PC-3 (cell line): ENCODE measurements at regions of chr19 and their contacts with region 1.

Region 1: DNA sequence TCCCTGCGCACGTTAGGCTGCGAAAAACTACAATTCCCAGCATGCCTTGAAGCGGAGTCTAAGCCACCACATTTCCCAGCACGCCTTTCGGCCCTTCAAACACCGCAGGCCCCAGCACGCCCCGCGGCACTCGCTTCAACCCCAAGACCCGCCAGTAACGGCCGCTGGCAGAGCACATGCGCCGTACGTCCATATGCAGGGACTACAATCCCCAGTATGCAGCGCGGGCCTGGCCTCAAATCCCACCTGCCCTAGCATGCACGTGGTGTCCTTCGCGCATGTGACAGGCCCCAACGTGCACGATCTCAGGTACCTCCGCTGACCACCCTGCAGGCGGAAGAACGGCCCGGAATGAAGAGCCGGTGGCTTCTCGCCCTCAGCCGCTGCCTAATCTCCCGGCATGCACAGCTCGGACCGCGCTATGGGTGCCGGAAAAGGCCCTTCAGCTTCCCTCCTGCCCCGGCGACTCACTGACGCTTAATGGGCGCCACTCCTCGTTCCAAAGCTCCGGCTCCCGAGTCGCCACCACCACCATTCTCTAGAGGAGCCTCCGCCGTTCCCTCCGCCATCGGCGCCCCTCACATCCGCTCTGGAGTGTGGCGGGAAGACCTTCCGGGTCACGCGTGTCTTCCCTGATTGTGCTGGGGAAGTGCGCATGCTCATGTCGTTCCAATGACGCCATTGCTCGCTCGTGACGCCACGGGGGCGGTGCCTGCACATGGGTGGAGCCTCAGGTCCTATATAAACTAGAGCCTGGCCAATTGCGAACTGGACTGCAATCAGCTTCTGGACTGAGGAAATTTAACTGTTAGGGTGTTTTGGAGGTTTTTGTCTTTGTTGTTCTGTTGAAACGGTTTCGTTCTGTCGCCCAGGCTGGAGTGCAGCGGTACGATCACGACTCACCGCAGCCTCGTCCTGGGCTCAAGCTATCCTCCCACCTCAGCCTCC is at the start of gene DUS3L:
- DNase-seq: peak; percentile 99
- ATAC-seq: peak; percentile 95
- H3K4me3 ChIP-seq: peak within 1 kb of the TSS; percentile 78
- H3K27ac ChIP-seq: peak within 1 kb of the TSS; percentile 91
- H3K4me1 ChIP-seq: peaks cover 8% of the 10 kb centered on the region
- H3K27me3 ChIP-seq: no peaks in the 10 kb centered on the region
- CTCF ChIP-seq: no peak
- total RNA-seq, gene DUS3L: 118 and 148 TPM in 2 replicates

Region 2: DNA sequence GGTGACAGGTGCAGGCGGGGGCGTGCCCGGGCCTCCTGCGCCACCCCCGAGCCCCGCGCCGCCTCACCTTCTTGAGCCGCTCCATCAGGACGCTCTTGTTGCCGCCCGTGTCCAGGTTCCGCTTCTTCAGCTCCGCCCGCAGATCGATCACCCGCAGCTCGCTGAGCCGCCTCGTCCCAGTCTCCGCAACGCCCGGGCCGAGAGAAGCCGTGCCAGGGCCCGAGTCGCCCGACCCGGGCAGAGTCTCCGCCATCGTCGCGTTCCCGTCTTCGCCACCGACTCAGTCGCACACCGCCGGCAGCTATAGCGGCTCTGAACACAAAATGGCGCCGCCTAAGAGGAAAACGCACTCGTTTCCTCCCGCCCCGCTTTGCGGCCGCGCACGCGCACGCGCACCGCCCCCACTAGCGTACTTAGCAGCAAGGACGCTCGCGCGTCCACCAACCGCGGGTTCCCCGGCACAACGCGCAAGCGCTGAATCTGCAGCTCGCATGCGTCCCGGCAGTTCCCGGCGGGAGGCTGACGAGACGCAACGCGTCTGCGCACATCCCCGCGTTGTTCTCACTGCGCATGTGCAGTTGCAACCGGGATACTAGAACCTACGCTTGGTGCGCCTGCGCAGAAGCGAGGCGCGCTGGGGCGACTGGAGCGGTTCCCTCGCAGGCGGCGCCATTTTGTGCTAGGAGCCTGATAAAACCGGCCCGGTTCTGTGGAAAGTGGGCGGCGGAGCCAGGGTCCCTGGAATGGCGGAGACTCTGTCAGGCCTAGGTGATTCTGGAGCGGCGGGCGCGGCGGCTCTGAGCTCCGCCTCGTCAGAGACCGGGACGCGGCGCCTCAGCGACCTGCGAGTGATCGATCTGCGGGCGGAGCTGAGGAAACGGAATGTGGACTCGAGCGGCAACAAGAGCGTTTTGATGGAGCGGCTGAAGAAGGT is 168.1 kb before region 1 on chr19 and contains the starts of genes SAFB and SAFB2:
- CTCF ChIA-PET with region 1: no interaction called
- POLR2A ChIA-PET with region 1: interaction called, 14 read pairs
- intact Hi-C with region 1: no loop called
- DNase-seq: peak; percentile 100
- ATAC-seq: peak; percentile 90
- H3K4me3 ChIP-seq: peak within 1 kb of the TSS; percentile 90
- H3K27ac ChIP-seq: peak within 1 kb of the TSS; percentile 67
- H3K4me1 ChIP-seq: peaks cover 36% of the 10 kb centered on the region
- H3K27me3 ChIP-seq: no peaks in the 10 kb centered on the region
- CTCF ChIP-seq: no peak
- total RNA-seq, gene SAFB: 94.9 and 164 TPM in 2 replicates
- total RNA-seq, gene SAFB2: 77.5 and 101 TPM in 2 replicates

Region 3: DNA sequence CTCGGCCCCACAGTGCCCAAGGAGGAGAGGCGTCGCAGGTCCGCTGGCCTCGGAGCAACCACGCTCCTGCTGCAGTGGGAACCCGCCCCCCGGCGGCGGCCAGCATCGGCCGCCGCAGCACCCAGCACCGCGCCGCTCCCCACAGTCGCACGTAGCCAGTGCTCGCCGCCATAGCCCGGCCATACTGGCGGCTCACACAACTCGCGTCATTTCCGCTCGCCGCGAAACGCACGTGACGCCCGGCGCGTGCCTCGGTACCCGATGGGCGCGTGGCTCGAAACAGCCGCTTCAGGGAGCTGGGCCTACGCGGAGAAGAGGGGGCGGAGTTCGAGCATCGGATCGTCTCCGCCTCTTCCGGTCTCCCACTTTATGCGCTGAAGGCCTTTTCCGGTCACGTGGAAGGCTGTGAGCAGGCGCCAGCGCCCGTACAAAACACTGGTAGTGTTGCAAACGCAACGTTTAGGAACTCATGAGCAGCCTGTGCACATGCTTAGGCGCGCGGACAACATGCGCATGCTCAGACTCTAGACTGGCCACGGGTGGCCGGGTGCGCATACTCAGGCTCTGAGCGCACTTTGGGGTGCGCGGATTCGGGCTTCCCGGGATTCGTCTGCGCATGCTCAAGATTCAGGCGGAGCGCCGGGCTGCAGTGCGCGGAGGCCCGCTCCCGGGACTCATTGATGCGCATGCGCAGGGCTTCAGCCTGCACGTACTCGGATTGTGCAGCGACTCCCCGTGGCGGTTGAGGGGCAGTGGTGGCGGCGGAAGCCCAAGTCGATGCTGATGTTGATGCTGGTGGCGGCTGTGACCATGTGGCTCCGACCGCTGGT is 70.7 kb before region 1 on chr19 and contains the starts of genes CATSPERD and LONP1:
- CTCF ChIA-PET with region 1: no interaction called
- POLR2A ChIA-PET with region 1: no interaction called
- intact Hi-C with region 1: loop called (anchors 1 kb)
- DNase-seq: peak; percentile 100
- ATAC-seq: peak; percentile 89
- H3K4me3 ChIP-seq: peak within 1 kb of the TSS; percentile 95
- H3K27ac ChIP-seq: peak within 1 kb of the TSS; percentile 93
- H3K4me1 ChIP-seq: peaks cover 18% of the 10 kb centered on the region
- H3K27me3 ChIP-seq: no peaks in the 10 kb centered on the region
- CTCF ChIP-seq: peak; percentile 92
- total RNA-seq, gene CATSPERD: not detected in 2 replicates
- total RNA-seq, gene LONP1: 217 and 306 TPM in 2 replicates

Region 4: GRCh38 chr19:5775668-5776309 is 15.1 kb before region 1 on chr19:
- CTCF ChIA-PET with region 1: interaction called, 31 read pairs
- POLR2A ChIA-PET with region 1: interaction called, 3 read pairs
- intact Hi-C with region 1: loop called (anchors 1 kb)
- DNase-seq: peak; percentile 93
- ATAC-seq: peak; percentile 37; the same call in 1 of the 2 replicates
- H3K4me3 ChIP-seq: no peak overlapping the region
- H3K27ac ChIP-seq: no peak overlapping the region
- H3K4me1 ChIP-seq: no peaks in the 10 kb centered on the region
- H3K27me3 ChIP-seq: no peaks in the 10 kb centered on the region
- CTCF ChIP-seq: no peak

Region 5: GRCh38 chr19:5839065-5840017 is 48.5 kb after region 1 on chr19 and contains the start of gene FUT6:
- CTCF ChIA-PET with region 1: no interaction called
- POLR2A ChIA-PET with region 1: no interaction called
- intact Hi-C with region 1: no loop called
- DNase-seq: no peak
- ATAC-seq: no peak
- H3K4me3 ChIP-seq: no peak within 1 kb of the TSS
- H3K27ac ChIP-seq: no peak within 1 kb of the TSS
- H3K4me1 ChIP-seq: no peaks in the 10 kb centered on the region
- H3K27me3 ChIP-seq: no peaks in the 10 kb centered on the region
- CTCF ChIP-seq: no peak
- total RNA-seq, gene FUT6: 0.69 TPM in 1 of 2 replicates, not detected in the other

Region 6: DNA sequence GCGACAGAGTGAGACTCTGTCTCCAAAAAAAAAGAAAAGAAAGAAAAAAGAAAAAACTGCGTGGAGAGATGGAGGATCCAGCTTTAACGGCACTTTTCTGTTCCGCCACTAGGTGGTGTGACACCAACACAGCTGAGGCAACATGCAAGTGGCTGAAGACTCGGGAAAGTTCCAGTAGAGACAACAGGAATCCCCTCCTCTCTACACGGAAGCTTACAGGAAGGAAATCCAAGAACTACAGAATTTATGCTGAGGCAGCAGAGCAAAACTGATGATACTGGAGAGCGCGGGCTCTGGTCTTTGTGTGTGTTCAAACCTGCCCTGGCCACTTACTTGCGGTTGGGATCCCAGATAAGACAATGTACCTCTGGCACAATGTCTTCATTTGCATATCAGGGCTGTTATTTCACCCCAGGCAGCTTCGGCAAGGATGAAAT is 177.2 kb after region 1 on chr19:
- CTCF ChIA-PET with region 1: no interaction called
- POLR2A ChIA-PET with region 1: interaction called, 10 read pairs
- intact Hi-C with region 1: no loop called
- DNase-seq: peak; percentile 81
- ATAC-seq: peak; percentile 88
- H3K4me3 ChIP-seq: no peak overlapping the region
- H3K27ac ChIP-seq: no peak overlapping the region
- H3K4me1 ChIP-seq: no peaks in the 10 kb centered on the region; the same call in 1 of the 2 replicates
- H3K27me3 ChIP-seq: no peaks in the 10 kb centered on the region
- CTCF ChIP-seq: peak; percentile 92